ENCODE measurements at regions of chr11 and their contacts with region 1.

Region 1: GRCh38 chr11:109853156-109853776 is 239.9 kb upstream of the ZC3H12C start:
- DNase-seq: no peak
- ATAC-seq: no peak
- H3K4me3 Mint-ChIP-seq: no peak overlapping the region
- H3K27ac Mint-ChIP-seq: no peak overlapping the region
- H3K4me1 Mint-ChIP-seq: no peaks in the 10 kb centered on the region
- H3K27me3 Mint-ChIP-seq: no peaks in the 10 kb centered on the region

Region 2: DNA sequence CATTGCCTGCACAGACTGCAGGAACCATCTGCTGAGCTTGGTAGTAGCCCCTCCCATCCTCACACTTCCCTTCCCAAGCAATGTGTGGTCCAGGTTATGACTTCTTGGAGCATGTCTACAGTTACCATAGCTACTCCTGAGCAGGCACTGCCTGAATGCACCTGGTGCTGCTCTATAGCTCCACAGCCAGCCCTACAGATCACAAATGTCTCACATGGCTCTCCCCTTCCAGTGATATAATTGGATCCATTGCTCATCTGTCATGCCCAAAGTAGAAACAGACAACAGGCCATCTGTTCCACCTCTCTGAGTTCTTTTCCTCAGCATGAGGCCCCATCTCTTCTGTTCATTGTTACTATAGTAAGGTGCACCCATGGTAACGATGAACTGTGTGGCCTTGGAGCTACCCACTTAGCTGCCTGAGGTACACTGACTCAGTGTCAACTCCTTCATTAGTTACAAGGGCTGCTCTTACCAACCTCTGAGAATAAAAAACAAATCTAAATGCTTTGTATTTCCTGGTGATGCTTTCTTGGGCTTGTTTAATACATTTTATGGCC is 80.3 kb before region 1 on chr11:
- CTCF ChIA-PET with region 1: no interaction called
- POLR2A ChIA-PET with region 1: no interaction called
- intact Hi-C with region 1: no loop called
- DNase-seq: no peak
- ATAC-seq: no peak
- H3K4me3 Mint-ChIP-seq: no peak overlapping the region
- H3K27ac Mint-ChIP-seq: no peak overlapping the region
- H3K4me1 Mint-ChIP-seq: no peaks in the 10 kb centered on the region
- H3K27me3 Mint-ChIP-seq: no peaks in the 10 kb centered on the region

Region 3: GRCh38 chr11:109892321-109892794 is 39.1 kb after region 1 on chr11:
- CTCF ChIA-PET with region 1: no interaction called
- POLR2A ChIA-PET with region 1: no interaction called
- intact Hi-C with region 1: no loop called
- DNase-seq: no peak
- ATAC-seq: no peak
- H3K4me3 Mint-ChIP-seq: no peak overlapping the region
- H3K27ac Mint-ChIP-seq: no peak overlapping the region
- H3K4me1 Mint-ChIP-seq: no peaks in the 10 kb centered on the region
- H3K27me3 Mint-ChIP-seq: peaks cover 10% of the 10 kb centered on the region

Region 4: DNA sequence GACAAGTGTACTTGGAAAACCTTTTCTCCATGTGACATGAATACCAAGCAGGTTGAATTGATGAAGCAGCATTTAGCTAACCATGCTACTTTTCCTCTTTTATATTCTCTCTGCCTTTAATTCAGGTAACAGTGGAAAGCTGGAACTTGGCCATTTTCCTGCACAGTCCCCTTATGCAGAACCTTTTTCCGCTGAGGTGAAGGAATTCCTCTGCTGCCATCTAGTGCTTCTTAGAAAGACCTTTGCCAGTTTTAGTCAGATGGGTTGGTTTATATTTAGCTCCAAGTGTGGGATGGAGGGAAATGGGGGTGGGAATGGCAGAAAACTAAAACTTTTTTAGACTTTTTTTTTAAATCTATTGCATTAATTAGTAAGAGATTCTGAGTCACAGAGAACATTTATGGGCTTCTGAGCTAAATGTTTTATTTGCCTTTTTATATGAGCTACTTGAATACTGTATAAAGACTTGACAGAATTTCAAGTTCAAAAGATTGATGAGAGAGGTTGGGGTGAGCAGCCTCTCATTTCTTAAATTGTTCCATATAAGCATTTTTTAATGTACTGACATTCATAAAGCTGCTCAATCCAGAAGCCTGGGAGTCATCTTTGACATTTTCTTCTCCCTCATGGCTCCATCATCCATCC is 86.0 kb after region 1 on chr11:
- CTCF ChIA-PET with region 1: interaction called, 7 read pairs
- POLR2A ChIA-PET with region 1: no interaction called
- intact Hi-C with region 1: loop called in 1 of 2 experiments (anchors 1 kb)
- DNase-seq: no peak
- ATAC-seq: no peak
- H3K4me3 Mint-ChIP-seq: no peak overlapping the region
- H3K27ac Mint-ChIP-seq: no peak overlapping the region
- H3K4me1 Mint-ChIP-seq: no peaks in the 10 kb centered on the region
- H3K27me3 Mint-ChIP-seq: peaks cover 6% of the 10 kb centered on the region

Region 5: GRCh38 chr11:109960831-109961230 is 107.6 kb after region 1 on chr11:
- CTCF ChIA-PET with region 1: no interaction called
- POLR2A ChIA-PET with region 1: no interaction called
- intact Hi-C with region 1: no loop called
- DNase-seq: no peak
- ATAC-seq: no peak
- H3K4me3 Mint-ChIP-seq: no peak overlapping the region
- H3K27ac Mint-ChIP-seq: no peak overlapping the region
- H3K4me1 Mint-ChIP-seq: no peaks in the 10 kb centered on the region
- H3K27me3 Mint-ChIP-seq: no peaks in the 10 kb centered on the region

Measured in activated CD4-positive, alpha-beta T cell treated with anti-CD3 and anti-CD28 coated beads for 36 hours (primary cell).